Head of caudate nucleus (tissue), 42 donors: ENCODE measurements at regions of chr7 and their contacts with region 1.

Region 1: DNA sequence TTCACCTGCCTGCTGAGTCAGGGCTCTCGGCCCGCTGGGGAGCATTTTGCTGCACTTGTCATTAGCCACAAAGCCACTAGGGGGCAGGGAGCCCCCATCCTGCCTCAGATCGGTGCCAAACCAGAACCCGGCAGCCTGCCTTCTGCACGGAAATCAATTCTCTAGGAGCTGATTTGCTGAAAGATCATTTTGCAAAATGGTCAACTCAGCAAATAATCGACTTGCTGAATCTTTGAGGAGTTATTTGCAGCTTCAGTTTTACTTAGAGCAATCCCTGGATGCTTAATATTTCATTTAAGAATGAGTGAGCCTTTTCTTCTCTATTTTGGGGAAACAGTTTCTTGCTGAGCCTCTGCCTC is 1.7 kb upstream of the GIMAP8 start:
- DNase-seq: peak; percentile 71 to 93 (median 82)

Region 2: GRCh38 chr7:150756858-150757257 is 308.1 kb after region 1 on chr7:
- intact Hi-C with region 1: loop called (anchors 5 kb)
- DNase-seq: peak in 2 of 42 donors; percentile 17 to 29